Upper lobe of right lung (tissue), 1 donor: ENCODE measurements at regions of chr12 and their contacts with region 1.

Region 1: DNA sequence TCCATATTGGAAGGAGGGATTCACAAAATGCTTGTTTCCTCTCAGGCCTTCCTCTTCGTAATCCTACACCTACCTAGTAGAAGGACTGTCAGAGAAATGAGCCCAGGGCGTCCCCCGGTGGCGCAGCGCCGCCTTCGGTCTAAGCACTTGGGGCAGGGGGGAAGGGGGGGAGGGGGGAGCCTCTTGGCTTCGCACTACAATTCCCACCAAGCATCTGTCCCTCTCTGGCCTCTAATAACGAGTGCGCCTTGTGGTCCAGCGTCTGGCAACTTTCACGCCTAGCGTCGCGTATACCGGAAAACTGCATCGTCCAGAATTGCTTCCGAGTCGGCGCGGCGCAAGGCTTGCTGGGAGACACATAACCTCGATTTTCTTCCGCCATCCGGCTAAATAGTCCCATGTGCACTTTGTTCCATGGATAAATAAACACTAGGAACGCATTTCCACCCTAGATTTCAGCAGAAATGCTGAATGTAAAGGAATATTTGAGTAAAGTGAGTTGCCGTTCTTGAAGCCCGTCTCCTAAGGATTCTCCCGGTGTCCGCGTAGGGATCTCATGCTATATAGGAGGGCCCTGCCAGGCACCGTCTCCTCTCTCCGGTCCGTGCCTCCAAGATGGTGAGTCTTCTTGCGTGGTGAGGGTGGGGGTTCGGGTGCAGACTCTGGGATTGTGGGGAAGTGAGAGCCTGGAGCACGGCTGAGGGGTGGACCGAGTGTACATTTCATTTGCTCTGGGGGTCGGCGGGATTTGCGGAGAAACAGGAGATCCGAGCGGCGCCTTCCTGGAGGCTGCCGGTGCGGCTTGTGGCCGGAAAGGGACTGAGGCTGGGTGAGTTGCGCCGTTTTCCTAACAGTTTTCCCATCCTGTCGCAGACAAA is at the start of gene RPS26:
- DNase-seq: peak; percentile 97
- ATAC-seq: peak; percentile 97
- H3K4me3 ChIP-seq: peak within 1 kb of the TSS; percentile 87
- H3K27ac ChIP-seq: peak within 1 kb of the TSS; percentile 94
- H3K4me1 ChIP-seq: peaks cover 19% of the 10 kb centered on the region
- H3K27me3 ChIP-seq: no peaks in the 10 kb centered on the region
- CTCF ChIP-seq: peak; percentile 41
- total RNA-seq, gene RPS26: 55.4 TPM

Region 2: DNA sequence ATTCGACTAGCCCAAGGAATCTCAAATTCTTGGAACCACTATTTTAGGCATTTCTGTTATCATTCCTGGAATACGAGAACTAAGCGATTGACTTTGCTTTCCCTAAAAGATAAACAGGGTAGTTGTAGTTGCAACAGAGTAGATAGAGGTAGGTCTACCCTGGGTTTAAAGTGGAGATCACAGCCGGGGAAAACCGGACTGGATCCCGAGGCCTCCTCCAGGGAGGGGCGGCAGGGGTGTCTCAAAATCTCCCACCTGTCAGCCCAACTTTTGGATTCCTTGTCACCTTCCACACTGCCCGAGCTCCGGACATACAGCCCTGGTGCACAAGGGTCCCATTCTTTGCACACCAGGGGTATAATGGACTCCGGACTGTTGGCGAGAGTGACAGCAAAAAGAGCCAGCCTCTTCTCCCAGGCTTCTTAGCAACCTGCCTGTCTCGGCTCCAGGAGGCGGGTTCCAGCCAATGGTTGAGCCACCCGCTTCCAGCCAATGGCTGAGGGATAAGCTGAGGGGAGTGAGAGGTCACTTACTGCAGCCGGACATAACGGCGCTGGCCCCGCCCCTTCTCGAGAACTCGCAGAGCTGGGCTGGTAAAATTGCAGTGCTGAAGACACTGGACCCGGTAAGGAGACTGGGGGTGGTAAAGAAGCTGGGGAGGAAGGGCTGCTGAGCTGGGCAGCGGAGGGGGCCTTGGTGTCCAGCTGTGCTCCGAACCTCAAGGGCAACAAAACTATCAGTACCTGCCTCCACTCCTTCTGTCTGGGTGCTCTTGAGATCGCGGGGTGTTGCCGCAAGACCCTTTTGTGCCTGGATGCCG is 44.9 kb before region 1 on chr12 and contains the start of gene SUOX:
- intact Hi-C with region 1: loop called (anchors 10 kb)
- DNase-seq: peak; percentile 97
- ATAC-seq: peak; percentile 99
- H3K4me3 ChIP-seq: peak within 1 kb of the TSS; percentile 82
- H3K27ac ChIP-seq: peak within 1 kb of the TSS; percentile 85
- H3K4me1 ChIP-seq: peaks cover 18% of the 10 kb centered on the region
- H3K27me3 ChIP-seq: no peaks in the 10 kb centered on the region
- CTCF ChIP-seq: no peak
- total RNA-seq, gene SUOX: 20.3 TPM

Region 3: DNA sequence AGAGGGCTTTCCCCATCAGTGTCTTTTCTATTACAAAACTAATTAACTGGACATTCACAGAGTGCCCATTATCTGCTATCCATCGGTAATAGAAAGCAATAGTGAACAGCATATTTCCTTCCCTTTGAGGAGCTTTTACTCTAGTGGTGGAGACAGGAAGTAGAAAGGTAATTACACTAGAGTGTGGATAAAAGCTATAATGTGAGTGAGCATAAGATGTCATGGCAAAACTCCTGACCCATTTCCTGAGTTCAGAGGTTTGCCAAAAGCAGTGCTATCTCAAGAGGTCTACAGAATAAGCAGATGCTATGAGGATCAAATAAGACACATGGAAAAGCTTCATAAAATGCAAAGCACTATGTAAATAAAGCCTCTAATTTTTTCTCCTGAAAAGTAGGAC is 383.4 kb after region 1 on chr12:
- intact Hi-C with region 1: no loop called
- DNase-seq: no peak
- ATAC-seq: no peak
- H3K4me3 ChIP-seq: no peak overlapping the region
- H3K27ac ChIP-seq: no peak overlapping the region
- H3K4me1 ChIP-seq: no peaks in the 10 kb centered on the region
- H3K27me3 ChIP-seq: no peaks in the 10 kb centered on the region
- CTCF ChIP-seq: no peak